Right cardiac atrium (tissue), 5 donors: ENCODE measurements at regions of chr6 and their contacts with region 1.

Region 1: GRCh38 chr6:27188885-27189418 is 58.5 kb upstream of the PRSS16 start:
- DNase-seq: peak; percentile 51 to 77 (median 55)
- ATAC-seq: peak; percentile 93 to 94
- H3K4me3 ChIP-seq: peak overlapping the region; percentile 58
- H3K27ac ChIP-seq: peak overlapping the region; percentile 60
- H3K4me1 ChIP-seq: no peaks in the 10 kb centered on the region
- H3K27me3 ChIP-seq: no peaks in the 10 kb centered on the region

Region 2: GRCh38 chr6:27472617-27473400 is 283.9 kb after region 1 on chr6 and contains the start of gene ZNF184:
- intact Hi-C with region 1: loop called in 1 of 4 experiments (anchors 10 kb)
- DNase-seq: peak; percentile 97 to 98 (median 97)
- ATAC-seq: peak; percentile 100
- H3K4me3 ChIP-seq: peak within 1 kb of the TSS; percentile 87
- H3K27ac ChIP-seq: peak within 1 kb of the TSS; percentile 96
- H3K4me1 ChIP-seq: no peaks in the 10 kb centered on the region
- H3K27me3 ChIP-seq: no peaks in the 10 kb centered on the region
- total RNA-seq, gene ZNF184: 3.3 to 5.1 (median 4.5) TPM

Region 3: GRCh38 chr6:27795697-27796494 is 606.9 kb after region 1 on chr6:
- intact Hi-C with region 1: loop called in 1 of 4 experiments (anchors 5 kb)
- DNase-seq: no peak
- ATAC-seq: peak; percentile 78 to 79
- H3K4me3 ChIP-seq: no peak overlapping the region
- H3K27ac ChIP-seq: no peak overlapping the region
- H3K4me1 ChIP-seq: no peaks in the 10 kb centered on the region
- H3K27me3 ChIP-seq: no peaks in the 10 kb centered on the region